ENCODE measurements at regions of chr12 and their contacts with region 1.

Region 1: GRCh38 chr12:123365025-123365917 is 624 bp upstream of the SBNO1 start:
- DNase-seq: peak; percentile 96 to 98
- H3K4me3 ChIP-seq: peak overlapping the region; percentile 82
- H3K27ac ChIP-seq: peak overlapping the region; percentile 95
- H3K4me1 ChIP-seq: peaks cover 14% of the 10 kb centered on the region
- H3K27me3 ChIP-seq: no peaks in the 10 kb centered on the region
- CTCF ChIP-seq: peak; percentile 74

Region 2: DNA sequence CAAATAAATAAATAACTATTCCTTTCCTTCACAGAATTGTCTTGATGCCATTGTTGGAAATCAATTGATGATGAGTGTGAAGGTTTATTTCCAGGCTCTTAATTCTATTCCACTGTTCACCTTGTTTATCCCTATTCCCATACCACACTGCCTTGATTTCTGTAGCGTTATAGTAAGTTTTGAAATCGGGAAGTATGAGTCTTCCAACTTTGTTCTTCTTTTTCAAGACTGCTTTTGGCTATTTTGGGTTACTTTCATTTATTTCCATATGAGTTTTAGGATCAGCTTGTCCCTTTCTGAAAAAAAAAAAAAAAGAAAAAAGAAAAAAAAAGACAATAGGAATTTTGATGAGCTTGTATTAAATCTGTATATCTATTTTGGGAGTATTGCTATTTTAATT is 84.3 kb before region 1 on chr12:
- CTCF ChIA-PET with region 1: interaction called, 12 read pairs
- POLR2A ChIA-PET with region 1: no interaction called
- intact Hi-C with region 1: no loop called
- DNase-seq: no peak
- H3K4me3 ChIP-seq: no peak overlapping the region
- H3K27ac ChIP-seq: no peak overlapping the region
- H3K4me1 ChIP-seq: no peaks in the 10 kb centered on the region
- H3K27me3 ChIP-seq: no peaks in the 10 kb centered on the region
- CTCF ChIP-seq: no peak

Region 3: DNA sequence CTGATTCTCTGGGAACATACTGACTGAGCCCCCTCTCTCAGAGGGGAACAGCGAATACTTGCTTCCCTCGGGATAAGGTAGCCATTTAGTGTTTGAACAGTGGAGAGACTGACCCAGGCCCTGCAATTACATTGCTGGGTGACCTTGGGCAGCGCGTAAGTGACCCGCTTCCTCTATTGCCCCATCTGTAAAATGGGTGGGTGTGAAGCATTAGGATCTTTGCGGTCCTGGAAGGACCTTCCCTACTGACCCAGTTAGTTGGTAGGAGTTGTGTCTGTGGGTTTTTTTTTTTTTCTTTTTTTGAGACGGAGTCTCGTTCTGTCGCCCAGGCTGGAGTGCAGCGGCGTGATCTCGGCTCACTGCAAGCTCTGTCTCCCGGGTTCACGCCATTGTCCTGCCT is 17.4 kb after region 1 on chr12:
- CTCF ChIA-PET with region 1: interaction called, 5 read pairs
- POLR2A ChIA-PET with region 1: interaction called, 17 read pairs
- intact Hi-C with region 1: loop called (anchors 1 kb)
- DNase-seq: no peak
- H3K4me3 ChIP-seq: peak overlapping the region; percentile 58
- H3K27ac ChIP-seq: peak overlapping the region; percentile 73
- H3K4me1 ChIP-seq: peaks cover 18% of the 10 kb centered on the region
- H3K27me3 ChIP-seq: no peaks in the 10 kb centered on the region
- CTCF ChIP-seq: no peak

Region 4: GRCh38 chr12:123388177-123388947 is 23.1 kb after region 1 on chr12:
- CTCF ChIA-PET with region 1: interaction called, 3 read pairs
- POLR2A ChIA-PET with region 1: interaction called, 17 read pairs
- intact Hi-C with region 1: loop called (anchors 1 kb)
- DNase-seq: peak; percentile 49 to 74
- H3K4me3 ChIP-seq: peak overlapping the region; percentile 80
- H3K27ac ChIP-seq: 0 out of 2 replicates have a peak overlapping the region, but pooled peaks have one; percentile 35
- H3K4me1 ChIP-seq: peaks cover 30% of the 10 kb centered on the region
- H3K27me3 ChIP-seq: no peaks in the 10 kb centered on the region
- CTCF ChIP-seq: no peak